ENCODE measurements at regions of chr11 and their contacts with region 1.

Region 1: GRCh38 chr11:32722255-32722654 is 72.2 kb downstream of the CCDC73 start:
- DNase-seq: no peak
- H3K4me3 ChIP-seq: no peak overlapping the region
- H3K27ac ChIP-seq: no peak overlapping the region
- H3K4me1 ChIP-seq: no peaks in the 10 kb centered on the region
- H3K27me3 ChIP-seq: no peaks in the 10 kb centered on the region
- CTCF ChIP-seq: no peak
- POLR2A ChIP-seq: no peak

Region 2: DNA sequence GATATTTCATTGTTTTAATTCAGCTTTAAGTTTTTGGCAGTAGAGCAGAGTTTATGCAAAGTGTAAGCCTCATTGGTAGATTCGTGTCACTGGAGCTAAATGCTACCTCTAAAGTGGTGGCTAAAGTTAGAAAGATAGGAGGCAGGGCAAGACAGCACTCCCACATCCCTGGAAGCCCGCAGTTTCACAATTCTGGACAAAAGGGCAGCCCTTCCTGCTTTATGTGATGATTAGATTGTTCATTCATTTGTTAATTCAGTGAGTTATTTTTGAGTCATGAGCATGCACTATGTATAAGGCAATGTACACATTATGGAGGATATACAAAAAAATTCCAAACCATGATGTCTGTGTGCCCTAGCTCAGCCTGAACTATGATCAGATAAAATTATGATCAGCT is 190.7 kb before region 1 on chr11:
- intact Hi-C with region 1: no loop called
- DNase-seq: no peak
- H3K4me3 ChIP-seq: no peak overlapping the region
- H3K27ac ChIP-seq: no peak overlapping the region
- H3K4me1 ChIP-seq: no peaks in the 10 kb centered on the region
- H3K27me3 ChIP-seq: no peaks in the 10 kb centered on the region
- CTCF ChIP-seq: no peak
- POLR2A ChIP-seq: no peak

Region 3: DNA sequence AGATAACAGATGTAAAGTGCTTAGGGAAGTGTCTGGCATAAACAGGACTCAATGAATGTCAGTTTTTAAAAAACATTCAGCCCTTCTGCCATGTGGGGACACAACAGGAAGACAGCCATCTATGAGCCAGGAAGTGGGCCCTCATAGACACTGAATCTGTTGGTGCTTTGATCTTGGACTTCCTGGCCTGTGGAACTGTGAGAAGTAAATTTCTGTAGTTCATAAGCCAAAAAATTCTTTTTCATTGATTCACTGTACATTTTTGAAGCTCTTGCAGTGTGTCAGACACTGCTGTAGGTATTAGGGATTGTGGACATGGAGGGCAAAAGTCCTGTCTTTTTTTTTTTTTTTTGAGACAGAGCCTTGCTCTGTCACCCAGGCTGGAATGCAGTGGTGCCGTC is 723.5 kb after region 1 on chr11:
- intact Hi-C with region 1: loop called (anchors 5 kb)
- DNase-seq: no peak
- H3K4me3 ChIP-seq: no peak overlapping the region
- H3K27ac ChIP-seq: no peak overlapping the region
- H3K4me1 ChIP-seq: no peaks in the 10 kb centered on the region
- H3K27me3 ChIP-seq: no peaks in the 10 kb centered on the region
- CTCF ChIP-seq: no peak
- POLR2A ChIP-seq: no peak